Aorta (tissue), 5 donors: ENCODE measurements at regions of chr3 and their contacts with region 1.

Region 1: GRCh38 chr3:113051302-113051711 is 60.5 kb downstream of the GTPBP8 start:
- DNase-seq: peak; percentile 83 to 91
- ATAC-seq: peak; percentile 99
- H3K4me3 ChIP-seq: peak overlapping the region in 1 of 2 donors; percentile 32
- H3K27ac ChIP-seq: no peak overlapping the region
- H3K4me1 ChIP-seq: no peaks in the 10 kb centered on the region
- H3K27me3 ChIP-seq: no peaks in the 10 kb centered on the region

Region 2: GRCh38 chr3:112751564-112752512 is 299.5 kb before region 1 on chr3:
- intact Hi-C with region 1: no loop called
- DNase-seq: no peak
- ATAC-seq: no peak
- H3K4me3 ChIP-seq: no peak overlapping the region
- H3K27ac ChIP-seq: no peak overlapping the region
- H3K4me1 ChIP-seq: no peaks in the 10 kb centered on the region
- H3K27me3 ChIP-seq: no peaks in the 10 kb centered on the region

Region 3: GRCh38 chr3:113136071-113136470 is 84.8 kb after region 1 on chr3:
- intact Hi-C with region 1: loop called (anchors 5 kb)
- DNase-seq: no peak
- ATAC-seq: no peak
- H3K4me3 ChIP-seq: no peak overlapping the region
- H3K27ac ChIP-seq: no peak overlapping the region
- H3K4me1 ChIP-seq: no peaks in the 10 kb centered on the region
- H3K27me3 ChIP-seq: no peaks in the 10 kb centered on the region

Region 4: GRCh38 chr3:113287803-113288648 is 236.7 kb after region 1 on chr3:
- intact Hi-C with region 1: loop called (anchors 1 to 2 kb)
- DNase-seq: no peak
- ATAC-seq: peak; percentile 79
- H3K4me3 ChIP-seq: no peak overlapping the region
- H3K27ac ChIP-seq: no peak overlapping the region
- H3K4me1 ChIP-seq: no peaks in the 10 kb centered on the region
- H3K27me3 ChIP-seq: no peaks in the 10 kb centered on the region

Region 5: GRCh38 chr3:113295463-113295862 is 244.2 kb after region 1 on chr3:
- intact Hi-C with region 1: loop called in 1 of 2 experiments (anchors 2 kb)
- DNase-seq: no peak
- ATAC-seq: no peak
- H3K4me3 ChIP-seq: no peak overlapping the region
- H3K27ac ChIP-seq: no peak overlapping the region
- H3K4me1 ChIP-seq: no peaks in the 10 kb centered on the region
- H3K27me3 ChIP-seq: no peaks in the 10 kb centered on the region

Region 6: GRCh38 chr3:113626503-113627371 is 575.4 kb after region 1 on chr3:
- intact Hi-C with region 1: loop called in 1 of 2 experiments (anchors 10 kb)
- DNase-seq: peak; percentile 69 to 79
- ATAC-seq: peak; percentile 86
- H3K4me3 ChIP-seq: no peak overlapping the region
- H3K27ac ChIP-seq: no peak overlapping the region
- H3K4me1 ChIP-seq: no peaks in the 10 kb centered on the region
- H3K27me3 ChIP-seq: no peaks in the 10 kb centered on the region